Esophagus muscularis mucosa (tissue), 4 donors: ENCODE measurements at regions of chr6 and their contacts with region 1.

Region 1: GRCh38 chr6:136582711-136583471 is 32.7 kb upstream of the MAP7 start:
- DNase-seq: no peak
- H3K4me3 ChIP-seq: no peak overlapping the region
- H3K27ac ChIP-seq: peak overlapping the region; percentile 57 to 71 (median 66)
- H3K4me1 ChIP-seq: peaks cover 19 to 28% (median 22%) of the 10 kb centered on the region in 4 donors
- H3K27me3 ChIP-seq: no peaks in the 10 kb centered on the region
- CTCF ChIP-seq: peak; percentile 56 to 66 (median 59)
- EP300 ChIP-seq: no peak
- POLR2A ChIP-seq: no peak

Region 2: DNA sequence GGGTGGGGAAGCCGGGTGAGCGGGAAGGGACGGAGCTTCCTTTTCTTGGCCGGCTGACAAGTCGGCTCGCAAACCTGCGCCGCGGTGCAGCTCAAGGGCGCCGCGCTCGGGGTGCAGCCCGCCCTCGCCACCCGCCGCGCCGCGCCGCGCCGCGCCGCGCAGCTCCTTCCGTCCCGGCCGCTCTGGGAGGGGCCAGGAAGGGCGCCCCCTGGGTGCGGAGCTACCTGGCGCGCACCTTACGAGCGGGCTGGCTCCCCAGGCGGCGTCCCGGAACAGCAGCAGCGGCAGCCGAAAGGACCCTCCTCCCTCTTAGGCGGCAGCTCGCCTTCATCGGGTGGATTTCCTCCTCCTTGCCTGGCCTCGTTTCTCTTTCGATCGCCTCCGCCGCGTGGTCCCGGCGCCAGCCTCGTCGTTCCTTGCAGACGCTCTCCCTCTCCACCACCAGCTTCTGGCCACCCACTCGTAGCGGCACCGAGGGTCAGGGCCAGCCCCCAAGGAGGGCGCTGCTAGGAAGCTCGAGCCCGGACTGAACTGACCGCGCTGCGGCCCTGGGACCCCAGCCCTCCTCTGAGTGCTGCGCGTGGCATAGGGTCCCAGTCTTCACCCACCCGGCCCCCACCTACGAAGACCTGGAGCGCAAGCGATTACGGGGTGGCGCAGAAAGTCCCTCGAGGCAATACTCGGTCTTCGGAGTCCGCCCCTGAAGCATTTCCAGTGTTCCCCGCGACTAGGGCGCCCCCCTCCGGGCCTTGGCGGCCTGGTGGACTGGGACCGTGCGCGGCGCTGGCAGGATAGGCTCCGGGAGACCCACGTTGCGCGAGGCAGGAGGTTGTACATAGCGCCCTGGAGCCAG is 209.7 kb after region 1 on chr6 and contains the start of gene MAP3K5:
- intact Hi-C with region 1: loop called (anchors 2 kb)
- DNase-seq: peak; percentile 96
- H3K4me3 ChIP-seq: peak within 1 kb of the TSS; percentile 67 to 93 (median 86)
- H3K27ac ChIP-seq: peak within 1 kb of the TSS; percentile 90 to 97 (median 95)
- H3K4me1 ChIP-seq: peaks cover 3 to 42% (median 37%) of the 10 kb centered on the region in 4 donors
- H3K27me3 ChIP-seq: no peaks in the 10 kb centered on the region
- CTCF ChIP-seq: peak; percentile 68 to 84 (median 74)
- EP300 ChIP-seq: no peak
- POLR2A ChIP-seq: no peak
- total RNA-seq, gene MAP3K5: 18.7 to 24.1 (median 20.7) TPM